ENCODE measurements at regions of chr2 and their contacts with region 1.

Region 1: GRCh38 chr2:70124983-70125480 is 37.8 kb downstream of the PCBP1 start:
- DNase-seq: no peak
- H3K4me3 ChIP-seq: peak overlapping the region; percentile 20 to 57 (median 22)
- H3K27ac ChIP-seq: peak overlapping the region; percentile 12
- H3K4me1 ChIP-seq: peaks cover 19% of the 10 kb centered on the region
- H3K27me3 ChIP-seq: no peaks in the 10 kb centered on the region
- CTCF ChIP-seq: no peak

Region 2: GRCh38 chr2:70086838-70087701 is 38.0 kb before region 1 on chr2 and contains the start of gene PCBP1:
- CTCF ChIA-PET with region 1: no interaction called
- dilution Hi-C with region 1: no loop called
- in situ Hi-C with region 1: loop called in 1 of 2 experiments (anchors 5 kb)
- intact Hi-C with region 1: loop called (anchors 5 kb)
- DNase-seq: peak; percentile 86
- H3K4me3 ChIP-seq: peak within 1 kb of the TSS; percentile 85 to 96 (median 86)
- H3K27ac ChIP-seq: peak within 1 kb of the TSS; percentile 99
- H3K4me1 ChIP-seq: peaks cover 36% of the 10 kb centered on the region
- H3K27me3 ChIP-seq: no peaks in the 10 kb centered on the region
- CTCF ChIP-seq: no peak
- total RNA-seq, gene PCBP1: 47.2 to 258 TPM

Region 3: DNA sequence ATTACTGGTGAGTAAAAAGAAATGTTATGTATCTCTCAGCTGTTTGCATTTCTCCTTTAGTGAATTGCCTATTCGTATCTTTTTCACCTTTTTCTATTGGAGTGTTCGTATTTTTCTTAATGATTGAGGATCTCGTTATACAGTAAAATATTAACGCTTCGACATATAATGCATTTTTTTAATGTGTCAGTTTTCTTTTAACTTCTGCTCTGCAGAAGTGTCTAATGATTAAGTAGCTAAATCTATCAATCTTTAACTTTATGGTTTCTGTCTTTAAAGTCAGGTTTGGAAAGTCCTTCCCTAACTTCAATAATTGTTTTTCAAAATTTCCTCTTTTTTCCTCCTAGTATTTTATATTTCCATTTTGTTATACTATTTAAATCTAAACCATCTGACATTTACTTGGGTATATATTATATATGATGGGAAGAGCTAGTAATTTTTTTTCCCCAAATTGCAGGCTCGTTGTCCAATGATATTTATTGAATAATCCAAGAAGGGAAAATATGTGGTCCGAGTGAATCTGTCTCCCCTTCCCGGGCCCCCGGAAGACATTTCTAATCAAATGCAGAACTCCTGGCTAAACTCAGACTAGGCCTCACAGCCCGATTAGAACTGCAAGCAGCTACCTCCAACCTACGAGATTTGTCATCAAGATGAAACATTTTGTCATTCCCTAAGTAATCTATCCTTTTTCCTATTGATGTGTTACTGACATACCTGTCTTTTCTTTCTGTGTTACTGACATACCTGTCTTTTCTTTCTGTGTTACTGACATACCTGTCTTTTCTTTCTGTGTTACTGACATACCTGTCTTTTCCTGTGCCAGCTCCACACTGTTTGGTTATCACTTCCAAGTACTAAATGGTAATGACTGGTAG is 20.6 kb before region 1 on chr2:
- CTCF ChIA-PET with region 1: interaction called, 11 read pairs
- dilution Hi-C with region 1: no loop called
- in situ Hi-C with region 1: no loop called
- intact Hi-C with region 1: no loop called
- DNase-seq: no peak
- H3K4me3 ChIP-seq: no peak overlapping the region
- H3K27ac ChIP-seq: no peak overlapping the region
- H3K4me1 ChIP-seq: peaks cover 13% of the 10 kb centered on the region
- H3K27me3 ChIP-seq: no peaks in the 10 kb centered on the region
- CTCF ChIP-seq: no peak